Activated naive CD4-positive, alpha-beta T cell treated with anti-CD3 and anti-CD28 coated beads for 36 hours (primary cell): ENCODE measurements at regions of chr12 and their contacts with region 1.

Region 1: GRCh38 chr12:91178139-91178561 is 4.5 kb downstream of the DCN start:
- DNase-seq: no peak
- H3K4me3 Mint-ChIP-seq: no peak overlapping the region
- H3K27ac Mint-ChIP-seq: no peak overlapping the region
- H3K4me1 Mint-ChIP-seq: peaks cover 4% of the 10 kb centered on the region
- H3K27me3 Mint-ChIP-seq: peaks cover 2% of the 10 kb centered on the region

Region 2: DNA sequence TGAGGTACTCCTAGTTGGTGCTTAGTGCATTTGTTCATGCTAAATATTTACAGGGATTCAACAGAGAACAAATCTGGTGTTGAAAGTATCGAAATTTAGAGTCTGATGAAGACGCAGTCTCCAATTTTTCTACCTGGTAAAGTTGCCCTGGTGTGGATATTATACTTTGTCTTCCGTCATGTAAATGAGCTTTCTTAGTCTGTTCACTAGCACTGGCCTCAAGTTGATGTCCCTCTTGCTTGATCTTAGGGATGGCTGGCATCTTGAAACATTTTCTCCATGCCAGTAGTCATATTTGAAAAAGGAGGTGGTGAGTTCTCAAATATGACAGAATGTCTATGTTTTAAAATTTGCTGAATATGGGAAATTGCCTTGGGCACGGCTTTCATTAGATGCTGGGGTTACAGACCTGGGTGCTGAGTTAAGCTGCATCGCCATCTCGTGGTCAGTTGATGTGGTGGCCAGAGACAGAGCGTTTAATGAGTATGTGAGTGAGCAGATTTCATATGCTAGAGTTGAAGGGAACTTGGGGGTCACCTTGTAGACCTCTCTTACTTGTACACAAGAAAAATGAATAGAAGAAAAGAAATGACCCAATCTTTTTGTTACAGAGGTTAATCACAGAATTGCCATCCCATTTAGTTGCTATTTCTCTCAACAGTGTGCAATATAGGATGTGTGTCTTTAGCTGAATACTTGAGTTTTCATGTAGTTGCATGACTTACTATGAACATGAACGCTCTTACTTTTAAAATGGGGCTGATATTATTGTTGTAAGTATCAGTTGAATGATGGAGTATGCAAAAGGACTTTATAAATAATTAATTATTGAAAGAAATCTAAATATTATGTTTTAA is 177.2 kb after region 1 on chr12:
- CTCF ChIA-PET with region 1: interaction called, 4 read pairs
- intact Hi-C with region 1: loop called (anchors 1 kb)
- DNase-seq: peak; percentile 71
- H3K4me3 Mint-ChIP-seq: no peak overlapping the region
- H3K27ac Mint-ChIP-seq: no peak overlapping the region
- H3K4me1 Mint-ChIP-seq: no peaks in the 10 kb centered on the region
- H3K27me3 Mint-ChIP-seq: peaks cover 7% of the 10 kb centered on the region